ENCODE measurements at regions of chr7 and their contacts with region 1.

Region 1: DNA sequence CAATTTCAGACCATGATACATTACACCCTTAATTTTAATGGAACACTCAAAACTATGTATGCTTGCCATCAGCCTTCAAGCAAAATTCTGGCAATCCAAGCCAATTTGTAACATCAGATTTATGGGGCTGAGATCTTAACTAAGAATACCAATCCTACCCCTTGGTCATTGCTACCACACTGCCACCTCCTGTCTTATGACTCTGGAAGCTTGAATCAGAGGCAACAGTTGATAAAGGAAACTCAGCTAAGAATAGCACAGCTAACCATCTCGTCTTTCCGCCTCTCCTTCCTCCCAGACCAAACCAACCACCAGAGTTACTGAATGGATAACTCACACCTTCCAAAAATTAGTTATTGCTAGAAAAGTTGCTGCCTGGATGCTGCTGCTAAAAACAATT is 7.4 kb downstream of the IGF2BP3 start:
- DNase-seq: peak; percentile 36
- ATAC-seq: peak; percentile 61
- H3K4me3 Mint-ChIP-seq: no peak overlapping the region
- H3K27ac Mint-ChIP-seq: no peak overlapping the region
- H3K4me1 Mint-ChIP-seq: peaks cover 5% of the 10 kb centered on the region
- H3K27me3 Mint-ChIP-seq: peaks cover 61% of the 10 kb centered on the region

Region 2: GRCh38 chr7:23431702-23432199 is 31.1 kb before region 1 on chr7:
- CTCF ChIA-PET with region 1: interaction called, 3 read pairs
- POLR2A ChIA-PET with region 1: no interaction called
- intact Hi-C with region 1: loop called in 1 of 2 experiments (anchors 1 kb)
- DNase-seq: no peak
- ATAC-seq: no peak
- H3K4me3 Mint-ChIP-seq: no peak overlapping the region
- H3K27ac Mint-ChIP-seq: no peak overlapping the region
- H3K4me1 Mint-ChIP-seq: peaks cover 2% of the 10 kb centered on the region
- H3K27me3 Mint-ChIP-seq: peaks cover 25% of the 10 kb centered on the region

Measured in activated CD4-positive, alpha-beta T cell treated with anti-CD3 and anti-CD28 coated beads for 36 hours (primary cell).